ENCODE measurements at regions of chr5 and their contacts with region 1.

Region 1: DNA sequence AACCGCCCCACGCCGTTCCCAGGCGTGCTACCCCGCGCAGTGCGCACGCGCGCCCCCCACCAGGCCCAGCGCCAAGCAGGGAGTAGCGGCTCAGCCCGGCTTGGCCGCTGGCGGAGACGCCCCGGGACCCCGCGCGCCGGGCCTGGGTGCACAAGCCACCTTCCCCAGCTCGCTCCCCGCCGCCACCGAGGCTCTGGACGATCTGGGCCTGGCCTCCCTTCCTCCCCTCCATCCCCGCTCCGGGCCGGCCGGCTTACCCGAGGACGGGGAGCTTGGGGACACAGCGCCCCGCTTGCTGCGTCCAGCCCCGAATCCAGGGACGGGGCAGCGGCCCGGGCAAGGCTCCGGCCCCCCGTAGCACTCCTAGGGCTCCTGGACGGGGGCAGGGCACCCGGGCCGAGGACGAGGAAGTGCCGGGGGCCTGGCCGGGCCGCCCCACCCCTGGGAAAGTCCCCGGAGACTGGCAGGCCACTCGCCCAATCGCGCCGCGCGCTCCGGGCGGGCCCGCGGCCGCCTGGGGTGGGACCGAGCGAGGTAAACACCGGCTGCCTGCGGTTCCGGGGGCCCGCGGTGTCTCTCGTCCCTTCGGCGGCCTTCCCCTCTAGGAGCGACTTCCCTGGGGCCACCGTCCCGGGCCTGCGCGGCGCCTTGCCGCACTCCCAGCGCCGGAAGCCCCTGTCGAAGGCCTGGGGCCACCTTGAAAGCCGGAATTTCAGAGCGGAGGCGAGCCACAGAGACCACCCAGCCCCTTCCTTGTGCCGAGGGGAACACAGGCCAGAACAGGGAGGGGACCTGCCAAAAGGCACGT is at the start of gene TNIP1:
- DNase-seq: peak; percentile 98
- ATAC-seq: peak; percentile 89
- H3K4me3 Mint-ChIP-seq: peak within 1 kb of the TSS; percentile 92
- H3K27ac Mint-ChIP-seq: peak within 1 kb of the TSS; percentile 72
- H3K4me1 Mint-ChIP-seq: peaks cover 65% of the 10 kb centered on the region
- H3K27me3 Mint-ChIP-seq: no peaks in the 10 kb centered on the region
- total RNA-seq, gene TNIP1: 172 to 176 TPM

Region 2: GRCh38 chr5:151051066-151051930 is 29.5 kb before region 1 on chr5:
- POLR2A ChIA-PET with region 1: no interaction called
- DNase-seq: peak; percentile 69
- ATAC-seq: peak; percentile 86
- H3K4me3 Mint-ChIP-seq: no peak overlapping the region
- H3K27ac Mint-ChIP-seq: peak overlapping the region; percentile 33
- H3K4me1 Mint-ChIP-seq: peaks cover 16% of the 10 kb centered on the region
- H3K27me3 Mint-ChIP-seq: no peaks in the 10 kb centered on the region

Region 3: GRCh38 chr5:151063142-151063949 is 17.5 kb before region 1 on chr5:
- POLR2A ChIA-PET with region 1: no interaction called
- DNase-seq: no peak
- ATAC-seq: no peak
- H3K4me3 Mint-ChIP-seq: no peak overlapping the region
- H3K27ac Mint-ChIP-seq: peak overlapping the region; percentile 30
- H3K4me1 Mint-ChIP-seq: peaks cover 40% of the 10 kb centered on the region
- H3K27me3 Mint-ChIP-seq: no peaks in the 10 kb centered on the region

Region 4: GRCh38 chr5:151097786-151098498 is 17.1 kb after region 1 on chr5:
- POLR2A ChIA-PET with region 1: interaction called, 11 read pairs
- DNase-seq: peak; percentile 35
- ATAC-seq: peak; percentile 72
- H3K4me3 Mint-ChIP-seq: peak overlapping the region; percentile 69
- H3K27ac Mint-ChIP-seq: peak overlapping the region; percentile 86
- H3K4me1 Mint-ChIP-seq: peaks cover 74% of the 10 kb centered on the region
- H3K27me3 Mint-ChIP-seq: no peaks in the 10 kb centered on the region

Region 5: GRCh38 chr5:151202381-151203139 is 121.7 kb after region 1 on chr5:
- POLR2A ChIA-PET with region 1: no interaction called
- DNase-seq: no peak
- ATAC-seq: peak; percentile 81
- H3K4me3 Mint-ChIP-seq: peak overlapping the region; percentile 35
- H3K27ac Mint-ChIP-seq: peak overlapping the region; percentile 21
- H3K4me1 Mint-ChIP-seq: peaks cover 17% of the 10 kb centered on the region
- H3K27me3 Mint-ChIP-seq: no peaks in the 10 kb centered on the region